GM18951 (cell line): ENCODE measurements at regions of chr17 and their contacts with region 1.

Region 1: GRCh38 chr17:3738562-3739295 is 15.0 kb downstream of the HASPIN start:
- POLR2A ChIP-seq: no peak

Region 2: GRCh38 chr17:3683054-3683511 is 55.6 kb before region 1 on chr17:
- in situ Hi-C with region 1: loop called (anchors 5 kb)
- POLR2A ChIP-seq: no peak

Region 3: DNA sequence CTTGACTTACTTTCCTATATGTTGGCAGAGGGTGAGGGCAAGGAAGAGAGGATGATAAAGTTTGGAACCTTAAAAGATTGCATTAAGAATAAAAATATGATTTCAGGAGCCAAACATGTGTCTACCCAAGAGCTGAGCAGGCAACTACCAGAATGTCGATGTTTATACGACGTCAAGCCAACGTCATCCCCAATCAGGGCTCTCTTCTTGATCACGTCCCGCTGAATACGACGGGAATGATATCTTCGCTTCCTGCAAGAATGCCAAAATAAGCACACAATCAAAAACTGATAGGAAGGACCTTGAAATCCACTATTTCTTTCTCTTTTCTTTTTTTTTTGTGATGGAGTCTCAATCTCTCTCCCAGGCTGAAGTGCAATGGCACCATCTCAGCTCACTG is 82.4 kb after region 1 on chr17:
- in situ Hi-C with region 1: loop called (anchors 5 kb)
- POLR2A ChIP-seq: no peak